Activated CD4-positive, alpha-beta memory T cell treated with anti-CD3 and anti-CD28 coated beads, Interleukin-2, amount 10 ng/mL, durations not matched to agents 7 days and 5 days (primary cell): ENCODE measurements at regions of chr10 and their contacts with region 1.

Region 1: GRCh38 chr10:130110246-130111112 is at the start of gene C10orf143:
- DNase-seq: peak; percentile 97
- H3K4me3 Mint-ChIP-seq: peak within 1 kb of the TSS; percentile 95
- H3K27ac Mint-ChIP-seq: peak within 1 kb of the TSS; percentile 96
- H3K4me1 Mint-ChIP-seq: peaks cover 52% of the 10 kb centered on the region
- H3K27me3 Mint-ChIP-seq: no peaks in the 10 kb centered on the region
- total RNA-seq, gene C10orf143: 2.5 TPM

Region 2: DNA sequence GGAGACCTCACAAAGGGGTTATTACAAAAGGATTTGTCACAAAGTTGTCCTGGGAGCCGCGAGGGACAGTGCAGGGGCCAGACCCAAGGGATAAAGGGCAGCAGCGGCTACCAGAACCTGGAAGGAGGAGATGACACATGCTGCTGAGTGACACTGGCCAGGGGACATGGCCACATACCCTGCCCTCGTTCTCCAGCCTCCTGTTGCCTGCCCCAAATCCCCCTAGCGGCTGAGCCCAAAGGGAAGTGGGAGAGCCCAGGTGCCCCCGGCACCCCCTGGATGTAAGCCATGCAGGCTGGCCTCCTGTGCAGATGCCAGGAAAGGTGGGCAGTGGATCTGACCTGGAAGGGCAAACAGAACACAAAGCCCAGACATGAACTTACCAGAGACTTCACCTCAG is 42.6 kb before region 1 on chr10:
- CTCF ChIA-PET with region 1: no interaction called
- POLR2A ChIA-PET with region 1: no interaction called
- DNase-seq: no peak
- H3K4me3 Mint-ChIP-seq: no peak overlapping the region
- H3K27ac Mint-ChIP-seq: no peak overlapping the region
- H3K4me1 Mint-ChIP-seq: no peaks in the 10 kb centered on the region
- H3K27me3 Mint-ChIP-seq: no peaks in the 10 kb centered on the region

Region 3: GRCh38 chr10:130127364-130128061 is 17.0 kb after region 1 on chr10:
- CTCF ChIA-PET with region 1: interaction called, 32 read pairs
- POLR2A ChIA-PET with region 1: interaction called, 39 read pairs
- DNase-seq: peak; percentile 55
- H3K4me3 Mint-ChIP-seq: no peak overlapping the region
- H3K27ac Mint-ChIP-seq: no peak overlapping the region
- H3K4me1 Mint-ChIP-seq: peaks cover 6% of the 10 kb centered on the region
- H3K27me3 Mint-ChIP-seq: peaks cover 35% of the 10 kb centered on the region

Region 4: GRCh38 chr10:130141878-130142277 is 31.4 kb after region 1 on chr10:
- CTCF ChIA-PET with region 1: interaction called, 27 read pairs
- POLR2A ChIA-PET with region 1: interaction called, 198 read pairs
- DNase-seq: peak; percentile 36
- H3K4me3 Mint-ChIP-seq: no peak overlapping the region
- H3K27ac Mint-ChIP-seq: peak overlapping the region; percentile 34
- H3K4me1 Mint-ChIP-seq: peaks cover 67% of the 10 kb centered on the region
- H3K27me3 Mint-ChIP-seq: no peaks in the 10 kb centered on the region

Region 5: GRCh38 chr10:130179640-130180039 is 69.2 kb after region 1 on chr10:
- CTCF ChIA-PET with region 1: interaction called, 17 read pairs
- POLR2A ChIA-PET with region 1: interaction called, 3 read pairs
- DNase-seq: peak; percentile 57
- H3K4me3 Mint-ChIP-seq: no peak overlapping the region
- H3K27ac Mint-ChIP-seq: no peak overlapping the region
- H3K4me1 Mint-ChIP-seq: peaks cover 27% of the 10 kb centered on the region
- H3K27me3 Mint-ChIP-seq: no peaks in the 10 kb centered on the region

Region 6: GRCh38 chr10:130224228-130224627 is 113.7 kb after region 1 on chr10:
- CTCF ChIA-PET with region 1: no interaction called
- POLR2A ChIA-PET with region 1: no interaction called
- DNase-seq: no peak
- H3K4me3 Mint-ChIP-seq: no peak overlapping the region
- H3K27ac Mint-ChIP-seq: no peak overlapping the region
- H3K4me1 Mint-ChIP-seq: no peaks in the 10 kb centered on the region
- H3K27me3 Mint-ChIP-seq: peaks cover 2% of the 10 kb centered on the region